ENCODE measurements at regions of chr5 and their contacts with region 1.

Region 1: GRCh38 chr5:142000703-142001484 is 11.9 kb downstream of the GNPDA1 start:
- DNase-seq: no peak
- ATAC-seq: no peak
- H3K4me3 ChIP-seq: no peak overlapping the region
- H3K27ac ChIP-seq: no peak overlapping the region
- H3K4me1 ChIP-seq: no peaks in the 10 kb centered on the region
- H3K27me3 ChIP-seq: no peaks in the 10 kb centered on the region
- CTCF ChIP-seq: peak in 1 of 7 experiments; percentile 9
- POLR2A ChIP-seq: no peak

Region 2: DNA sequence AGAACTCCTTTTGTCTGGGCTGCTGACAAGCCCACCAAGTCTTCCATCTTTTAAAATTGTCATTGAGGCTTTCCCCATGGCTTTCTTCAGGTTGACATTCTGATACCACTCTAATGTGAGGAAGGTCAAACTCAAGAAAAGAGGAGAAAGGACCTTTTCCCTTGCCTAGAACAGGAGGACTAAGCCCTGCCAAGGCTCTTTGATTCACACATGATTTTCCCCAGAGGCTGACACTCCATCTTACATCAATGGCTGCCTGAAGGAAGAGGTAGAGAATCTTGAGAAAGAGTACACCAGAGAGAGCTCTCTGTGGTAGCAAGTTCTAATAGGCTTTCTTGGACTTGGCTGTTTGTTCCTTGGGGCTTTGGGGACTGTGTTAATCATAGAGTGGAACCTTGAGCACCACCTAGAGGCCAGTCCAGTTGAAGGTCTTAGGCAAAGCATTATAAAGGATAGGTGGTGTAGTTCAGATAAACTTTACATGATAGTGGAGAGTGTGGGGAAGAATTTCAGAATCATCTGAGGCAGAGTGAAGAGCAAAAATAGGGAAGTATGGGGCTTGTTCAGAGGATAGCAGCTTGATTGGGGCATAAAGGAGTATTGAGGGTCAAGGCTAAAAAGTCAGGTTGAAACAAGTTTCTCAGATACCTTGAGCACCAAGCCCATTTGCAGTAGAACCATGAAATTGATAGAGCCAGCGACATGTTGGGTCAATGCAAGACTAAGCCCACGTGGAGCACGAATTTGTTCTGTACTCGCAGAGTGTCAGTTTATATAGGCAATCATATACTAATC is 144.4 kb after region 1 on chr5:
- intact Hi-C with region 1: loop called (anchors 10 kb)
- DNase-seq: peak; percentile 62 to 81 (median 72)
- ATAC-seq: peak; percentile 75
- H3K4me3 ChIP-seq: no peak overlapping the region
- H3K27ac ChIP-seq: no peak overlapping the region
- H3K4me1 ChIP-seq: no peaks in the 10 kb centered on the region
- H3K27me3 ChIP-seq: no peaks in the 10 kb centered on the region
- CTCF ChIP-seq: peak; percentile 31 to 71 (median 65)
- POLR2A ChIP-seq: no peak

Measured in body of pancreas (tissue), 4 donors.